Heart left ventricle (tissue), 16 donors: ENCODE measurements at regions of chr11 and their contacts with region 1.

Region 1: DNA sequence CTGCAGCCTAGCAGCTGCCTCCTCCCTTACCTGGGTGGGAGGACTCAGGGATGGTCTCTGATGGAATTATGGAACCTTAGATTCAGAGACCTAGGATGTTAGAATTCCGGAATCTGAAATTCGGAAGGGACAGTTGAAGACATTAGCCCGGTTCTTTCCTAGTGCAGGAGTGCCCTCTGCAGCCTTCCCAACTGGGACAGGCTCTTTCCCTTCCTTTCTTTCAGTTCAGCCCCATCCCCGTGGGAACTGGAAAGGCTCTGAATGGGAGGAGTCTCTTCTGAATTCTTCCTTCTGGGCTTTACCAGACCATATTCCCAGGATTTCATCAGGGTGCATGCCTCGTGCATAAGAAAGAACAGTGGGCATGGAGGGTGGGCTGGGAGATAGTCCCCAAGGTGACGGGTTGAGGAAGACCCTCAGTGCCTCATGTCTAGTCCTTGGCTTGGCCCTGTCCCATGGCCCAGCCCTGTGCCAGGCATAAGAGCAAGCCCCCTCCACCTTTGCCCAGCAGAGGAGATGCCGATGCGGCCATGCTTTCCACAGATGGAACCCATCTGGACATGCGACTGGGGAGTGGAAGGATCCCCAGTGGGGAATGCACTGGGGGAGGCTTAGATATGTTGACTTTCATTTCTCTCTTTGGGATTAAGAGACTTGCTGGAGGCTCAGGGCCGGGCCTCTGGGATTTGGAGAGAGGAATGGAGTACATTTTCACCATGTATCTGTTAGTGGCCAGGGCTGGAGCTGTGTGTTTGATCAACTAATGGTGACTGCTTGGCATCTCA is 14.4 kb downstream of the DNAJB13 start:
- DNase-seq: no peak
- ATAC-seq: peak in 1 of 4 donors; percentile 17
- H3K4me3 ChIP-seq: no peak overlapping the region
- H3K27ac ChIP-seq: no peak overlapping the region
- H3K4me1 ChIP-seq: peaks cover 0 to 12% (median 3%) of the 10 kb centered on the region in 12 donors
- H3K27me3 ChIP-seq: no peaks in the 10 kb centered on the region
- CTCF ChIP-seq: no peak
- POLR2A ChIP-seq: no peak

Region 2: DNA sequence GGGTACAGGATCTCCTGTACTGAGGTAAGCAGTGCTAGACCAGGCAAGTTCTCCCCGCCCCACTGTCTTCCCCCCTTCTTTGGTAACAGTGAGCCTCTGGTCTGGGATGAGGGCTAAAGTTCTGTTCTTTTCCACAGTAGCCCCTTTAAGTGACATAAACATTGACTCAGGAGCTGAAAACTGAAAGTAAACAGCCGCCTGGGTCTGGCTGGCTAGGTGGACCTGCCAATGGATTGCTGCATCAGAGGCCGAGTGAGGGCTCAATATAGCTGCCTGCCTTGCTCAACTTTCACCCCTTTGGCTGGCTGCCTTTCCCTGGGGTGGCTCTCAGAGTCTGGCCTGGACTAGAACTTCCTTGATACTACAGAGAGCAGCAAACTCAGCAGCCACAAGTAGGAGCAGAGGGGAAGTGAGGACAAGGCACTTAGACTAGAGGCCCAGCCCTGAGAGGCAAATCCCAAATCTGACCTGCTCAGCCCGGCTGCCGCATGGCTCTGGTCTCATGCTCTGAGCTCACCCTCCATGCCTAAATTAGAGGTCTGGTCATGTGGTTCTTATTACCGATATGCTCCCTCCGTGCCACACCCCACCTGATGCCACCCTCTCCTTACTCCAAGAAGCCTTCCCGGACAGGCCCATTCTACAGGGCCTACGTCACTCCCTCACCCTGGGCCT is 53.2 kb after region 1 on chr11:
- intact Hi-C with region 1: loop called in 4 of 10 experiments (anchors 2 to 10 kb)
- DNase-seq: peak; percentile 90 to 96 (median 93)
- ATAC-seq: peak; percentile 95 to 96 (median 95)
- H3K4me3 ChIP-seq: no peak overlapping the region
- H3K27ac ChIP-seq: peak overlapping the region; percentile 76 to 97 (median 88)
- H3K4me1 ChIP-seq: peaks cover 0 to 75% (median 24%) of the 10 kb centered on the region in 12 donors
- H3K27me3 ChIP-seq: no peaks in the 10 kb centered on the region
- CTCF ChIP-seq: peak in 1 of 12 donors; percentile 6
- POLR2A ChIP-seq: peak in 1 of 2 donors; percentile 16

Region 3: DNA sequence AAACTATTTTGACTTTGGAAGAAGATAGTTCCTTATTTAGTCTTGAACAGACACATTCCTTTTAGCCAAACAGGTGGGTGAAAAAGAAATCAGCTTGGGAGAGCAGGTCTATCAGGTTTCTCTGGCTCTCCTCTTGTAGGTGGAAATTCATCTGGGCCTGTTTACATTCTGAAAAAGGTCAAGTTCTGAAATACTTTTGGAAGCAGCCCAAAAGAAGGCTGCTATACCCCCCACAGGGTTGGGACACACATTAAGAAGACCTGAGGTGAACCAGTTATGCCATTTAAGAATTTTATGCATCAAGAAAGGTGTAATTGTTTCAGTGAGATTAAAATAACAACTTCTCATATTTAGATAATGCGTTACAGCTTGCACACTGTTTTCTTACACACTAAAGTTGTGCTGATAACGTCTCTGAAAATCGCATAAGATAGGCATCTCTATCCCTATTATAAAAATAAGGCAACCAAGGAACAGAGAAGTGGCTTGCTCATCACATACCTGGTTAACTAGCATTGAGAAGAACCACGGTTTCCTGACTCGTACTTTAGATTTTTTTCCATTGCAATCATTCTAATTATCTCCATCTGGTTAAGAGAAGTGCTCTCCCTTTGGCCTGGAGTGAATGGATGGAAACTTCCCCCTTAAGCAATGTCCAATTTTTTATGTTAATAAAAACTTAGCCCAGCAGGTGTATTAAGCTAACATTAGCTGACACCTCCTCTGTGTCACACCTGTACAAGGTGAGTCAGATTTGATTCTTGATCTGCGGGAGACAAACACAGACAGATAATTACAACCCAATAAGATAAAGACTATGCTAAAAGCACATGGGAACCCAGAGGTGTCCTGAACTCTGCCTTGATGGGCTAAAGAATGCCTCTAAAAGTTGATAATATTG is 104.1 kb after region 1 on chr11:
- intact Hi-C with region 1: loop called in 1 of 10 experiments (anchors 10 kb)
- DNase-seq: no peak
- ATAC-seq: no peak
- H3K4me3 ChIP-seq: no peak overlapping the region
- H3K27ac ChIP-seq: no peak overlapping the region
- H3K4me1 ChIP-seq: no peaks in the 10 kb centered on the region
- H3K27me3 ChIP-seq: no peaks in the 10 kb centered on the region
- CTCF ChIP-seq: no peak
- POLR2A ChIP-seq: no peak

Region 4: GRCh38 chr11:74090701-74091100 is 125.4 kb after region 1 on chr11:
- intact Hi-C with region 1: loop called in 2 of 10 experiments (anchors 10 kb)
- DNase-seq: no peak
- ATAC-seq: no peak
- H3K4me3 ChIP-seq: no peak overlapping the region
- H3K27ac ChIP-seq: no peak overlapping the region
- H3K4me1 ChIP-seq: no peaks in the 10 kb centered on the region
- H3K27me3 ChIP-seq: no peaks in the 10 kb centered on the region
- CTCF ChIP-seq: peak in 1 of 12 donors; percentile 8
- POLR2A ChIP-seq: no peak

Region 5: DNA sequence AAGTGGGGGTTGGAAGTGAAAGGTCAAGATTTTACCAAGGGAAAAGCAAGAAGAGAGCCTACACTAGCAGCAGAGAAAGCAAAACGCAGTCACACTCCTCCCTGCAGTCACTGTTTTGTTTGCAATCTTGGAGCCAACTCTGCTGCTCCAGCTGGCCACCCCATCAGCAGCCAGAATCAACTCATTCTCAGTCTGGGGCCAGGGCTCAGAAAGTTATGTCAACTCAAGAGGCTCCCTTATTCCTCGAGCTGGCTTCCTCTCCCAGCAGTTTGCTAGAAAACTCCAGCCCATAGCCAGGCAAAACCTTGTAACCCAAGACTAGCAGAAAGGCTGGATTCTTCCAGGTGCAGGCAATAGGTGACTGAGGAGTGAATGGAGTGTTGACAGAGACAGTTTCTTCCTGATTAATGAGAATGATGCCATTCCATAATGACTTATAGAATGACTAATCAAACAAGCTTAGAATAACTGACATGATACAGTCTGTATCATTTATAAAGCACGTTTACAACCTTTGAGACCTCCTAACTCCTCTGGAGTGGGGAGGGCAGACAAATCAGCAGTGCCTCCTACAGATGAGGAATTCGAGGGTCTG is 292.8 kb after region 1 on chr11:
- intact Hi-C with region 1: no loop called
- DNase-seq: peak in 4 of 5 donors; percentile 51 to 66 (median 57)
- ATAC-seq: peak in 3 of 4 donors; percentile 71 to 84 (median 79)
- H3K4me3 ChIP-seq: no peak overlapping the region
- H3K27ac ChIP-seq: no peak overlapping the region
- H3K4me1 ChIP-seq: peaks cover 0 to 13% (median 0%) of the 10 kb centered on the region in 12 donors
- H3K27me3 ChIP-seq: no peaks in the 10 kb centered on the region
- CTCF ChIP-seq: no peak
- POLR2A ChIP-seq: no peak

Region 6: GRCh38 chr11:74683279-74683871 is 718.1 kb after region 1 on chr11:
- intact Hi-C with region 1: no loop called
- DNase-seq: peak in 2 of 5 donors; percentile 40 to 56
- ATAC-seq: peak in 2 of 4 donors; percentile 16 to 26
- H3K4me3 ChIP-seq: peak overlapping the region; percentile 26 to 61 (median 48)
- H3K27ac ChIP-seq: peak overlapping the region in 9 of 12 donors; percentile 11 to 81 (median 55)
- H3K4me1 ChIP-seq: peaks cover 0 to 43% (median 9%) of the 10 kb centered on the region in 12 donors
- H3K27me3 ChIP-seq: peaks cover 0 to 8% (median 0%) of the 10 kb centered on the region in 9 donors
- CTCF ChIP-seq: peak in 11 of 12 donors; percentile 19 to 56 (median 42)
- POLR2A ChIP-seq: no peak